ENCODE measurements at regions of chr4 and their contacts with region 1.

Region 1: GRCh38 chr4:7802093-7802726 is 137.5 kb downstream of the AFAP1 start:
- DNase-seq: peak; percentile 83
- H3K4me3 Mint-ChIP-seq: no peak overlapping the region
- H3K27ac Mint-ChIP-seq: no peak overlapping the region
- H3K4me1 Mint-ChIP-seq: peaks cover 15% of the 10 kb centered on the region
- H3K27me3 Mint-ChIP-seq: no peaks in the 10 kb centered on the region

Region 2: DNA sequence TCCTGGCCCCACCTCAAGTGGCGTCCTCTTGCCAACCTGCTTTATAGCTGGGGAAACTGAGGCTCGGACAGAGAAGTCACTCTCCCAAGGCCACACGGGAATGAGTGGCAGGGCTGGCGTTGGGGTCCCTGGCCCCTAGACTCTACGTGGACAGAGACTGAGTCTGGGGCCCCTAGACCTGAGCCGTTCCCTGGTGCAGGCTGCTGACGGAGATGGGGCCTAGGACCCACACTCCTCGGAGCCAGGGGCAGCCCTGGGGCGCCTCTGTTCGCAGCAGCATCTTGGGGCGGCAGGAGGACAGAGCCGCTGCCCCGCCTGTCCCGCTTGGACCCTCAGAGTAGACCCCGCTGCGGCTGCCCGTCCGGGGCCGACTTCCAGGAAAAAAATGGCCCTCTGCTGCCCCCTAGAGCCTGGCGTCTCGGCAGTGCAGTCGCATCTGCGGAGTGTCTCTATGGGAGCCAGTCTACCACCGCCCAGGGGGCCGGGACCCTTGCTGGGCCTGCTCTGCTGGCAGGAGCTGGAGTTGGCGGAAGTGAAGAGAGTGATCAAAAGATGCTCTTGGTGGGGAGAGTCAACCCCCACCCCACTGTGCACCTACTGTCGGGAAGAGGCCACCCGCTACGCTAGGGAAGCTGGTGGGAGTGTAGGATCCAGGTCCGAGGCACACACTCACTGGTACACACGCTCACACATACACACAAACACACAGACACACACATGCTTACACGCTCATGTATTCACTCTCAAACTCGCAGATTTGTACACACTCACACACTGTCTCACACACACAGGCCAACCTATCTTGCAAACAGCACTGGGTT is 82.6 kb before region 1 on chr4:
- CTCF ChIA-PET with region 1: no interaction called
- POLR2A ChIA-PET with region 1: no interaction called
- DNase-seq: peak; percentile 65
- H3K4me3 Mint-ChIP-seq: no peak overlapping the region
- H3K27ac Mint-ChIP-seq: no peak overlapping the region
- H3K4me1 Mint-ChIP-seq: no peaks in the 10 kb centered on the region
- H3K27me3 Mint-ChIP-seq: peaks cover 2% of the 10 kb centered on the region

Region 3: DNA sequence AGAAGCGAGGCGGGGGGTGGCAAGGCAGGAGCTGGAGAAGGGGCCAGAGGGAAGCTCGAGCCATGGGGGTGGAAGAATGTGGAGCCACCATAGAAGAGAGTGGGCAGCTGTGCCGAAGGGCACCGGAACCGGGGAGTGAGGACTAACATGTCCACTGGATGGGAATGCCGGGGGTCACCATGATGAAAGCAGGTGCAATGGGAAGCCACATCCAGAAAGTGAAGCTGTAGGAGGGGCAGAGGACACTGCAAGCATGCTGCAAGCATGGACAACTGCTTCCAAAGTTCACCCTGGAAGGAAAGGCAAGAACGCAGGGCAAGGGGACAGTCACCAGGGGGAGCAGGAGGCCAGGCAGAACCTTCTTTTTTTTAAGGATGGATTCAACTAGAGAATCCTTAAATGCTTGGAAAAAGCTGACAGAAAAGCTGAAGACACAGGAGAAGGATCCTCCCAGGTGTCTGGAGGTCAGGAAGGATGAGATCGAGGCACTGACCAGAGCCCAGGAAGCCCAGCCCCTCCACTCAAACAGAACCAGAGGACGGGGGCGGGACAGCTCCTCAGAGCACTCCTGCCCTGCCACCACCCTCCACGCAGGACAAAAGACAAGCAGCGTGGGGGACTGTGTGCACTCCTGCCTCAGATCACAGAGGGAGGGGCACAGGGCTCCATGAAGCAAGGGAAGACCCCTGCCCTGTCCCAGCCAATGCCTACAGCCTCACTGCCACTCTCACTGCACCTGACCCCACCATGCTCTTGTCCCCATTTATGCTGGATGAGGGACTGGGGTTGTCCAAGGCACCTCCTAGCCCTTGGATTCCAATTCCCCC is 31.8 kb before region 1 on chr4:
- CTCF ChIA-PET with region 1: interaction called, 16 read pairs
- POLR2A ChIA-PET with region 1: no interaction called
- DNase-seq: peak; percentile 24
- H3K4me3 Mint-ChIP-seq: peak overlapping the region; percentile 15
- H3K27ac Mint-ChIP-seq: peak overlapping the region; percentile 81
- H3K4me1 Mint-ChIP-seq: peaks cover 20% of the 10 kb centered on the region
- H3K27me3 Mint-ChIP-seq: no peaks in the 10 kb centered on the region

Region 4: DNA sequence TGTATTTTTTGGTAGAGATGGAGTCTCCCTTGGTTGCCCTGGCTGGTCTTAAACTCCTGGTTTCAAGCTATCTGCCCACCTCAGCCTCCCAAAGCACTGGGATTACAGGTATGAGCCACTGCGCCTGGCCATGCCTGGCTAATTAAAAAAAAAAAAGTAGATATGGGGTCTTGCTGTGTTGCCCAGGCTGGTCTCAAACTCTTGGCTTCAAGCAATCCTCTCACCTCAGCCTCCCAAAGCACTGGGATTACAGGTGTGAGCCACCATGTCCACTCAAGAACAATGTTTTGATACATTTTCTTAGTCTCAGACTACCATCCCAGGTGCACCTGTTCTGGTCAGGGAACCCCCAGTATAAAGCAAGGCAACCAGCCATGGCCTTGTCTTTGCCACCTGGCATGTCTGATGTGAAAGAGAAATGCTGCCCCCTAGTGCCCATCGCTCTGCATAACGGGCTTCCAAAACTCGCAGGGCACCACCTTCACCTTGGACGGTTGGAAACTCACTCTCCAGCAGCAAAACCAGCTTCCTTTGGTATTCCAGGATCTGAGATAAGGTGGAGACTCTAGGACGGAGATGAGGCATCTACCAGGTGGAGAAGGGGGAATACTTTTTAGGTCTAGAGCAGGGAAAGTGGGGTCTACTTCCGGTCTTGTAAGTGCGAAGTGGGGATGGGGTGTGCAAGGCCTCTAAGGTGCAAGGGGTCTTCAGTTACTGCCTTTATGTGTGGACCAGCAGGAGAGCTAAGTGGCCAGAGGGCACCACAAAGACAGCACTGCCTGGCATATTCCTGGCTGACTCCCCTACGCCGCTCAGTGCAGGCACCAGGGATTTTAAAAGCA is 185.2 kb after region 1 on chr4:
- CTCF ChIA-PET with region 1: interaction called, 12 read pairs
- POLR2A ChIA-PET with region 1: no interaction called
- DNase-seq: peak; percentile 82
- H3K4me3 Mint-ChIP-seq: no peak overlapping the region
- H3K27ac Mint-ChIP-seq: no peak overlapping the region
- H3K4me1 Mint-ChIP-seq: peaks cover 7% of the 10 kb centered on the region
- H3K27me3 Mint-ChIP-seq: no peaks in the 10 kb centered on the region